Caco-2 (cell line): ENCODE measurements at regions of chr9 and their contacts with region 1.

Region 1: DNA sequence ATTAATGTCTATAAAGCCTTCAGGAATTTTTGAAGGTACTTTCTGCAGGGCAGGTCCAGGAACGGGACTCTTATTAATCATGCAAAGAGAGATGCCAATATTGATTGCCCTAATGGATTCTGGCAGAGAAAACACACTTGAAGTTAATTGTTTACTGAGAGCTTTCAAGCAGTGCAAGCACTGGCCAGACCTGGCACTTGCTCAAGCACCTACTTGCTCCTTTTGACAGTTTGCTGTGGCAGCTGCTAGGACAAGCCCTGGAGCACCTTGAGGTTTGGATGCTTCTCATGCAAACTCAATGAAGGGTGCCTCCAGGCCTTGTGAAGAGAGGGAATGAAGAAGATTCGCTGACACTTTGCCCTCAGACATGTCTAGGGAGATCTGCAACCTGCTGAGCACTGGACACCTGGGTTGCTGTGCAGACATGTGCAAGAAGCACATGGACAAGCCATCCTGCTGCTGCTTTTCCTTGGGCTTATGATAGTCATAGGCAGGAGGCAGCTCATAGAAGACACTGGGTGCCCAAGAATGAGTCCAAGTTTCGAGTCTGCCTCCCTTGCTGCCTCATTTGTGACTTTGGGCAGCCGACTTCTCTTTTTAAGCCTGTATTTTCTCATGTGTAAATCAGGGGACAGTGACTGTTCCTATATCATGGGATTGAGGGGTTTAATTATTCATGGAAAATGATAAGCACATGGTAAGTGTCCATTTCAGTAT is 88.8 kb upstream of the EQTN start:
- DNase-seq: no peak
- H3K4me3 ChIP-seq: no peak overlapping the region
- H3K4me3 Mint-ChIP-seq: no peak overlapping the region
- H3K27ac Mint-ChIP-seq: no peak overlapping the region
- H3K4me1 ChIP-seq: peaks cover 30% of the 10 kb centered on the region
- H3K4me1 Mint-ChIP-seq: peaks cover 38% of the 10 kb centered on the region
- H3K27me3 ChIP-seq: no peaks in the 10 kb centered on the region
- H3K27me3 Mint-ChIP-seq: no peaks in the 10 kb centered on the region
- CTCF ChIP-seq: no peak

Region 2: DNA sequence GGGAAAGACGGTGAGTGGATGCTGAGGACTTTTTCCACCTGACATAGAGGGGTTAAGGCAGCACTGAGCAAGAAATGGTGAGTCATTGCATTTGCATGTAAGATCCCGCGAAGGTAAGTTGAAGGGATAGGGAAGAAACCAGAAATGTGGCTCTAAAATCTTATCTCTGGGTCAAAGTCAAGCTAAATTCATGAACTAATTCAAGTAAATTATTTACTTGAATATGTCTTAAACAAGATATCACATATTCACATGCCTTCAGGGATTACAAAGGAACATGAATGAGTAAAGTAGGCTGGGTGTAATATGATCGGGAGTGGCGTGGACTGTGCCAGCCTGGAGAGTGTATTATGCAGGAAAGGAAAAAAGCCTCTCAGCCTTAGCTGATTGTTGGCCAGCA is 14.4 kb before region 1 on chr9:
- CTCF ChIA-PET with region 1: no interaction called
- POLR2A ChIA-PET with region 1: no interaction called
- intact Hi-C with region 1: loop called (anchors 2 kb)
- DNase-seq: peak; percentile 64 to 65
- H3K4me3 ChIP-seq: no peak overlapping the region
- H3K4me3 Mint-ChIP-seq: peak overlapping the region; percentile 57
- H3K27ac Mint-ChIP-seq: peak overlapping the region; percentile 80
- H3K4me1 ChIP-seq: peaks cover 52% of the 10 kb centered on the region
- H3K4me1 Mint-ChIP-seq: peaks cover 37% of the 10 kb centered on the region
- H3K27me3 ChIP-seq: no peaks in the 10 kb centered on the region
- H3K27me3 Mint-ChIP-seq: no peaks in the 10 kb centered on the region
- CTCF ChIP-seq: no peak